ENCODE measurements at regions of chr14 and their contacts with region 1.

Region 1: DNA sequence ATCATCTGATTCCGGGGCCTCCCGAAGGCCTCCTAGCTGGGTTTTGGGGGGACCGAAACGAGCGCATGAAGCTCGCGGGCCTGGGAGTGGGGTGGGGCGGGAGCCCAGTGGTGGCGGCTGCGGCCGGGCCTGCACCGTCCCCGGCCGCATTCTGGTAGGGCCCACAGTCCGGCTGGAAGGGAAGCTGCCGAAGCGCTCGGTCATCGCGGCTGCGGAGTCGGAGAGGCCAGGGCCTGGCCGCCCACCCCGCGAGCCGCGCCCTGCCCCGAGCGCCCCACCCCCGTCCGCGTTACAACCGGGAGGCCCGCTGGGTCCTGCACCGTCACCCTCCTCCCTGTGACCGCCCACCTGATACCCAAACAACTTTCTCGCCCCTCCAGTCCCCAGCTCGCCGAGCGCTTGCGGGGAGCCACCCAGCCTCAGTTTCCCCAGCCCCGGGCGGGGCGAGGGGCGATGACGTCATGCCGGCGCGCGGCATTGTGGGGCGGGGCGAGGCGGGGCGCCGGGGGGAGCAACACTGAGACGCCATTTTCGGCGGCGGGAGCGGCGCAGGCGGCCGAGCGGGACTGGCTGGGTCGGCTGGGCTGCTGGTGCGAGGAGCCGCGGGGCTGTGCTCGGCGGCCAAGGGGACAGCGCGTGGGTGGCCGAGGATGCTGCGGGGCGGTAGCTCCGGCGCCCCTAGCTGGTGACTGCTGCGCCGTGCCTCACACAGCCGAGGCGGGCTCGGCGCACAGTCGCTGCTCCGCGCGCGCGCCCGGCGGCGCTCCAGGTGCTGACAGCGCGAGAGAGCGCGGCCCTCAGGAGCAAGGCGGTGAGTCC is at the start of gene KLC1:
- DNase-seq: peak; percentile 89
- ATAC-seq: peak; percentile 72
- H3K4me3 Mint-ChIP-seq: peak within 1 kb of the TSS; percentile 87
- H3K27ac Mint-ChIP-seq: peak within 1 kb of the TSS; percentile 87
- H3K4me1 Mint-ChIP-seq: peaks cover 59% of the 10 kb centered on the region
- H3K27me3 Mint-ChIP-seq: no peaks in the 10 kb centered on the region
- CTCF ChIP-seq: no peak
- total RNA-seq, gene KLC1: 126 and 153 TPM in 2 replicates

Region 2: GRCh38 chr14:103141119-103141796 is 487.6 kb before region 1 on chr14:
- CTCF ChIA-PET with region 1: no interaction called
- POLR2A ChIA-PET with region 1: no interaction called
- intact Hi-C with region 1: no loop called
- DNase-seq: no peak
- ATAC-seq: no peak
- H3K4me3 Mint-ChIP-seq: no peak overlapping the region
- H3K27ac Mint-ChIP-seq: no peak overlapping the region
- H3K4me1 Mint-ChIP-seq: peaks cover 14% of the 10 kb centered on the region
- H3K27me3 Mint-ChIP-seq: peaks cover 36% of the 10 kb centered on the region
- CTCF ChIP-seq: no peak

Region 3: DNA sequence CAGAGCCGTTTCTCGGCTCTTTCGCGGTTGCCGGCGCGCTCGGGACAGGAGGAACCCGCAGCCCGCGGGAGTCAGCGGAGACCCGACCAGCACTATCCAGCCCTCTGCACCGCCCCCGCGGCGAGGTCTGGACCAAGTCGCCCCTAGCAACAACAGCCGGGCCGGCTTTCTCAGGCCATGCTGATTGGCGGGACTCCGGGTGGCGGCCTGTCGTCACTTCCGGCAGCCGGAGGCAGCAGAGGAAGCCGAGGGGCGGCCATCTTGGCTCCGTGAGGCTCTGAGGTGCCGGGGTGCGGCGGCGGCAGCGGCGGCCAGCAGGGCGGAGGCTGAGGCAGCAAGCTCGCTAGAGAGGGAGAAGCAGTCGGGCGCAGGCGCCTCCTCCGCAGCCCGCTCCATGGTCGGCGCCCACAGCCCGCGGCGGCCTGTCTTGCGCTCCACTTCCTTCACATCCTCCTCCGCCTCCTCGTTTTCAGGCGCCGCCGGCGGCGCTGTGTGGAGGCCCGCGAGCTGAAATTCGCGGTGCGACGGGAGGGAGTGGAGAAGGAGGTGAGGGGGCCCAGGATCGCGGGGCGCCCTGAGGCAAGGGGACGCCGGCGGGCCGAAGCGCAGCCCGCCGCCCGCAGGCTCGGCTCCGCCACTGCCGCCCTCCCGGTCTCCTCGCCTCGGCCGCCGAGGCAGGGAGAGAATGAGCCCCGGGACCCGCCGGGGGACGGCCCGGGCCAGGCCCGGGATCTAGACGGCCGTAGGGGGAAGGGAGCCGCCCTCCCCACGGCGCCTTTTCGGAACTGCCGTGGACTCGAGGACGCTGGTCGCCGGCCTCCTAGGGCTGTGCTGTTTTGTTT is 243.5 kb before region 1 on chr14 and contains the start of gene MARK3:
- CTCF ChIA-PET with region 1: no interaction called
- POLR2A ChIA-PET with region 1: no interaction called
- intact Hi-C with region 1: loop called (anchors 5 kb)
- DNase-seq: peak; percentile 93
- ATAC-seq: peak; percentile 90
- H3K4me3 Mint-ChIP-seq: peak within 1 kb of the TSS; percentile 97
- H3K27ac Mint-ChIP-seq: peak within 1 kb of the TSS; percentile 93
- H3K4me1 Mint-ChIP-seq: peaks cover 45% of the 10 kb centered on the region
- H3K27me3 Mint-ChIP-seq: peaks cover 2% of the 10 kb centered on the region
- CTCF ChIP-seq: no peak
- total RNA-seq, gene MARK3: 97.1 and 110 TPM in 2 replicates

Region 4: GRCh38 chr14:103562429-103563225 is 66.3 kb before region 1 on chr14 and contains the starts of genes BAG5 and COA8:
- CTCF ChIA-PET with region 1: interaction called, 4 read pairs
- POLR2A ChIA-PET with region 1: interaction called, 4 read pairs
- intact Hi-C with region 1: loop called (anchors 2 kb)
- DNase-seq: peak; percentile 89
- ATAC-seq: peak; percentile 79
- H3K4me3 Mint-ChIP-seq: peak within 1 kb of the TSS; percentile 89
- H3K27ac Mint-ChIP-seq: peak within 1 kb of the TSS; percentile 79
- H3K4me1 Mint-ChIP-seq: peaks cover 52% of the 10 kb centered on the region
- H3K27me3 Mint-ChIP-seq: no peaks in the 10 kb centered on the region
- CTCF ChIP-seq: no peak
- total RNA-seq, gene BAG5: 26.9 and 28.8 TPM in 2 replicates
- total RNA-seq, gene COA8: 28.4 and 28.8 TPM in 2 replicates

Region 5: DNA sequence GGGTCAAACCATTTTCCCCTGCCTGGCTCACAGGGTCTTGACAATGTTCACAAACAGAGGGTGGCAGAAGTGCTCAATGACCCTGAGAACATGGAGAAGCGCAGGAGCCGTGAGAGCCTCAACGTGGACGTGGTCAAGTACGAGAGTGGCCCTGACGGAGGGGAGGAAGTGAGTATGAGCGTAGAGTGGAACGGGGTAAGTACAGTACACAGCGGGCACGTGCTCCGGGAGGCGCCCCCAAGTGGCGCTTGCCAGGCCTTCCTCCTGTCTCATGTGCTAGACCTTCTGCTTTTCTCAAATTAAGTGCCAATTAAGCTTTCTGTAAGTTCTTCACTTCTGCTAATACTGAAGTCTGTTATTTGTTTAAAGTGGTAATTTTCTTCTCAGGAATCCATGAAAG is 50.5 kb after region 1 on chr14:
- CTCF ChIA-PET with region 1: interaction called, 4 read pairs
- POLR2A ChIA-PET with region 1: no interaction called
- intact Hi-C with region 1: loop called (anchors 1 kb)
- DNase-seq: peak; percentile 54
- ATAC-seq: peak; percentile 99
- H3K4me3 Mint-ChIP-seq: no peak overlapping the region
- H3K27ac Mint-ChIP-seq: peak overlapping the region; percentile 60
- H3K4me1 Mint-ChIP-seq: peaks cover 16% of the 10 kb centered on the region
- H3K27me3 Mint-ChIP-seq: no peaks in the 10 kb centered on the region
- CTCF ChIP-seq: no peak

Region 6: GRCh38 chr14:103715052-103716000 is 86.4 kb after region 1 on chr14 and contains the starts of genes XRCC3 and ZFYVE21:
- CTCF ChIA-PET with region 1: no interaction called
- POLR2A ChIA-PET with region 1: interaction called, 4 read pairs
- intact Hi-C with region 1: loop called (anchors 1 kb)
- DNase-seq: peak; percentile 97
- ATAC-seq: peak; percentile 95
- H3K4me3 Mint-ChIP-seq: peak within 1 kb of the TSS; percentile 89
- H3K27ac Mint-ChIP-seq: peak within 1 kb of the TSS; percentile 81
- H3K4me1 Mint-ChIP-seq: peaks cover 34% of the 10 kb centered on the region
- H3K27me3 Mint-ChIP-seq: no peaks in the 10 kb centered on the region
- CTCF ChIP-seq: no peak
- total RNA-seq, gene XRCC3: 23.5 and 26.0 TPM in 2 replicates
- total RNA-seq, gene ZFYVE21: 12.4 and 16.7 TPM in 2 replicates

Region 7: GRCh38 chr14:103727313-103727980 is 98.6 kb after region 1 on chr14:
- CTCF ChIA-PET with region 1: no interaction called
- POLR2A ChIA-PET with region 1: no interaction called
- intact Hi-C with region 1: no loop called
- DNase-seq: no peak
- ATAC-seq: no peak
- H3K4me3 Mint-ChIP-seq: no peak overlapping the region
- H3K27ac Mint-ChIP-seq: no peak overlapping the region
- H3K4me1 Mint-ChIP-seq: no peaks in the 10 kb centered on the region
- H3K27me3 Mint-ChIP-seq: no peaks in the 10 kb centered on the region
- CTCF ChIP-seq: no peak